A673 (cell line): ENCODE measurements at regions of chr4 and their contacts with region 1.

Region 1: GRCh38 chr4:161564230-161564834 is 599.5 kb downstream of the FSTL5 start:
- DNase-seq: peak; percentile 44
- H3K4me3 ChIP-seq: no peak overlapping the region
- H3K27ac ChIP-seq: no peak overlapping the region
- H3K4me1 ChIP-seq: peaks cover 24% of the 10 kb centered on the region
- H3K27me3 ChIP-seq: no peaks in the 10 kb centered on the region
- CTCF ChIP-seq: peak; percentile 60; the same call in 1 of the 2 replicates

Region 2: DNA sequence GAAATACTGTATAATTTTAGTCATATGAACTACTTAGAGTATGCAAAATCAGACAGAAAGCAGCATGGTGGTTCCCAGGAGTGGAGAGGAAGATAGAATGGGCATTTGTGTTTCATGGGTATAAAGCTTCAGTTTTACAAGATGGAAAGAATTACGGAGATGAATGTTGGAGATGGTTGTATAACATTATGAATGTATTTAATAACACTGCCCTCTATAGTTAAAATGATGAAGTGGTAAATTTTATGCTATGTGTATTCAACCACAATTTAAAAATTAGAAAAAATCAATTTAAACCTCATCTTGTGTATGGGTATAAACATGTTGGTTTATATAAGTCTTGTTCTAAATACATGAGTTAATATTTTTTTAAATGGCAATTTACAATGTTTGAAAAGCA is 78.4 kb after region 1 on chr4:
- CTCF ChIA-PET with region 1: no interaction called
- POLR2A ChIA-PET with region 1: no interaction called
- intact Hi-C with region 1: loop called (anchors 5 kb)
- DNase-seq: peak; percentile 54
- H3K4me3 ChIP-seq: no peak overlapping the region
- H3K27ac ChIP-seq: no peak overlapping the region
- H3K4me1 ChIP-seq: peaks cover 4% of the 10 kb centered on the region
- H3K27me3 ChIP-seq: no peaks in the 10 kb centered on the region
- CTCF ChIP-seq: peak; percentile 55; the same call in 1 of the 2 replicates

Region 3: GRCh38 chr4:161664740-161665139 is 100.4 kb after region 1 on chr4:
- CTCF ChIA-PET with region 1: no interaction called
- POLR2A ChIA-PET with region 1: no interaction called
- intact Hi-C with region 1: no loop called
- DNase-seq: no peak
- H3K4me3 ChIP-seq: no peak overlapping the region
- H3K27ac ChIP-seq: no peak overlapping the region
- H3K4me1 ChIP-seq: no peaks in the 10 kb centered on the region
- H3K27me3 ChIP-seq: no peaks in the 10 kb centered on the region
- CTCF ChIP-seq: no peak

Region 4: GRCh38 chr4:161817822-161818412 is 253.6 kb after region 1 on chr4:
- CTCF ChIA-PET with region 1: no interaction called
- POLR2A ChIA-PET with region 1: no interaction called
- intact Hi-C with region 1: loop called (anchors 10 kb)
- DNase-seq: peak; percentile 39
- H3K4me3 ChIP-seq: no peak overlapping the region
- H3K27ac ChIP-seq: no peak overlapping the region
- H3K4me1 ChIP-seq: no peaks in the 10 kb centered on the region
- H3K27me3 ChIP-seq: no peaks in the 10 kb centered on the region
- CTCF ChIP-seq: no peak

Region 5: GRCh38 chr4:162151850-162152249 is 587.5 kb after region 1 on chr4:
- CTCF ChIA-PET with region 1: no interaction called
- POLR2A ChIA-PET with region 1: no interaction called
- intact Hi-C with region 1: loop called (anchors 5 kb)
- DNase-seq: no peak
- H3K4me3 ChIP-seq: no peak overlapping the region
- H3K27ac ChIP-seq: no peak overlapping the region
- H3K4me1 ChIP-seq: no peaks in the 10 kb centered on the region
- H3K27me3 ChIP-seq: no peaks in the 10 kb centered on the region
- CTCF ChIP-seq: no peak

Region 6: DNA sequence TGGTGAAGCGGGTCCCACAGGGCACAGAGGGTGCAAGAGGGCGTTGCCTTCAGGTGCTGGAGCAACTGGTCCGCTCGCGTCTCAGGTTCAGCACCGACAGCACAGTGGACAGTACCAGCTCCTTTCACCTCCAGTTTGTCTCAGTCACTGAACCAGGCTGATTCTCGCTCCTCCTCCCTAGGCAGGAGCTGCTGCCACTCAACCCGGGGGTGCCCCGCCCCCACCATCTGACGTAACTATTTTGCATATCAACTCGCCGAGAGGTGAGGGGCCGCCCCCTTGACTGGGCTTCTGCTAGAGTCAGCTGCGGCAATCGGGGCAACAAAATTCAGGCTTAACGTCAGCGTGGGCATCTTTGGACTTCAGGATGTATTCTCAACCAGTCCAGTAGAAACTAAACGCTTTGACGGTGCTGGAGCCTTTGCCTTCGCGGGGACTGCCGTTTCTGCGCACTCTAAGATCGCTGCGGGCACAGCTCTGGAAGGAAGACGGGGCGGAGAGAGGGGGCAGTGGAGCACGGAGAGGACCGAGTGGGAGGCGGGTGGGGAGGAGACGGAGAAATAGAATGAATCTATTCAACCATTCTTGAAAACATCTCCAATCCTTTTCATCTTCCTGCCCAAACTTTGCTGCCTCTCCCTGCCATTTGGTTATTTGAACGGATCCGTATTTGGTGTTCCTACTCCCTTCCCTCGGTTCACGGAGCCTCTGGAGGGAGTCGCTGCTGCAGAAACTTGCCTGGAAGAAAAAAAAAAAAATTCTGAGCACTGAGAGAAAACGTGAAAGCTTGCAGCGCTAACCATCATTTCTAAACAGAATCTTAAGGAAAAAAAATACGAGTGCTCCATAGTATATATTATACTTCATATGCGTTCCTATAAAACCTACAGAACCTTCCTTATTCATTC is 599.8 kb after region 1 on chr4 and contains the start of gene FSTL5:
- CTCF ChIA-PET with region 1: no interaction called
- POLR2A ChIA-PET with region 1: no interaction called
- intact Hi-C with region 1: loop called (anchors 5 kb)
- DNase-seq: peak; percentile 90
- H3K4me3 ChIP-seq: peak within 1 kb of the TSS; percentile 61
- H3K27ac ChIP-seq: no peak within 1 kb of the TSS
- H3K4me1 ChIP-seq: no peaks in the 10 kb centered on the region
- H3K27me3 ChIP-seq: no peaks in the 10 kb centered on the region
- CTCF ChIP-seq: no peak
- total RNA-seq, gene FSTL5: 0.15 and 0.28 TPM in 2 replicates

Region 7: DNA sequence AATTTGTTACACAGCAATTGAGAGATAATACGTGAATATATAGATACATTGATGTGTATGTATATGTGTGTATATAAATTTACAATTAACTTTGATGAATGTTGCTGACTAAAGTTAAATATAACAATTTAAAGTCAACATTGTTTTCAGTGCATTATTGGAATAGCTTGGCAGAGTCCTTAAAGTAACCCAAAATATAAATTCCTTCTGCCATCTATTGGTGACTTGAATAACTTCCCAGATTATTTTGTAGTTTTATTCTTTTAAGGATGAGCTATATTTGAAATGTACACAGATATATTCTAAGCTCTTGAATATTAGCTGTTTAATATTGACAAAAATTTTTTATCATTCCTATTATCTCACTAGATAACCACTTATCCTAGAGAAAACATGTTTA is 897.6 kb after region 1 on chr4:
- CTCF ChIA-PET with region 1: no interaction called
- POLR2A ChIA-PET with region 1: no interaction called
- intact Hi-C with region 1: loop called (anchors 10 kb)
- DNase-seq: peak; percentile 25
- H3K4me3 ChIP-seq: no peak overlapping the region
- H3K27ac ChIP-seq: no peak overlapping the region
- H3K4me1 ChIP-seq: no peaks in the 10 kb centered on the region
- H3K27me3 ChIP-seq: no peaks in the 10 kb centered on the region
- CTCF ChIP-seq: peak; percentile 50; the same call in 1 of the 2 replicates